Heart right ventricle (tissue), 16 donors: ENCODE measurements at regions of chr6 and their contacts with region 1.

Region 1: DNA sequence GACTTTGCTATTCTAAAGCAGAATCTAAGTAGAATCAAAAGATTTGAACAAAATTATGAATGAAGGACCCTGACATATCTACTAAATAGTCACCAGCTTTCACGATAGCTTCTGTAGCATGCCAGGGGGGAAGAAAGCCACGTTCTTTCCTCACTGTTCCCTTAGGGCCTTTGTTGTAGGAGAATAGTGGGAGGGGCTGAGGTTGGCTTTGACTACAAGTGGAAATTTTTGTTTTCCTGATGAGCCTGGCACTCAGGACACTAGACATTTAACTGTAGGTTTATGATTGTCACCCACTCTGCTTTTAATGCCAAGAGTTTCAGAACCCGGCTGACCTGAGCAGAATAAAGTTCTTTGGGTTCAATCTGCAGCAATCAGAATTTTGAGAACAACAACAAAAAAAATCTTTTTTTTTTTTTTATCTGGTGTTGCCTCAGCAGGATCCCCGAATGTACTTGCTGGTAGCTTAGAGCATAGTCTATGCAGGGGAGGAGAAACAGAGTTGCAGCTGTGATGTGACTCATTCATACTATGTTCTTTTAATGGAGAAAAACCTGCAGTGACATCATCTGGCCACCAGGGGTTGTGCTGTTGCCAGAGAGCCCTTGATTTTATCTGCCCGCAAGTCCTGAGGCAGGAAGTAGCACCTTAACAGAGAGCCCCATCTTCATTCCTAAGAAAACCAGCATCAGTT is 38.5 kb downstream of the TPD52L1 start:
- DNase-seq: peak; percentile 20 to 36
- ATAC-seq: peak in 7 of 8 donors; percentile 24 to 81 (median 66)
- H3K4me3 ChIP-seq: no peak overlapping the region
- H3K27ac ChIP-seq: no peak overlapping the region
- H3K4me1 ChIP-seq: peaks cover 4 to 69% (median 46%) of the 10 kb centered on the region in 9 donors
- H3K27me3 ChIP-seq: no peaks in the 10 kb centered on the region
- CTCF ChIP-seq: peak; percentile 66 to 84 (median 69)

Region 2: GRCh38 chr6:125142618-125143017 is 49.4 kb before region 1 on chr6:
- intact Hi-C with region 1: no loop called
- DNase-seq: no peak
- ATAC-seq: no peak
- H3K4me3 ChIP-seq: no peak overlapping the region
- H3K27ac ChIP-seq: no peak overlapping the region
- H3K4me1 ChIP-seq: no peaks in the 10 kb centered on the region
- H3K27me3 ChIP-seq: no peaks in the 10 kb centered on the region
- CTCF ChIP-seq: no peak

Region 3: GRCh38 chr6:125228986-125229479 is 37.0 kb after region 1 on chr6:
- intact Hi-C with region 1: loop called in 1 of 10 experiments (anchors 2 kb)
- DNase-seq: no peak
- ATAC-seq: peak in 2 of 8 donors; percentile 41 to 48
- H3K4me3 ChIP-seq: peak overlapping the region in 8 of 10 donors; percentile 6 to 33 (median 22)
- H3K27ac ChIP-seq: peak overlapping the region in 5 of 10 donors; percentile 16 to 56 (median 32)
- H3K4me1 ChIP-seq: peaks cover 0 to 46% (median 14%) of the 10 kb centered on the region in 9 donors
- H3K27me3 ChIP-seq: no peaks in the 10 kb centered on the region
- CTCF ChIP-seq: no peak

Region 4: DNA sequence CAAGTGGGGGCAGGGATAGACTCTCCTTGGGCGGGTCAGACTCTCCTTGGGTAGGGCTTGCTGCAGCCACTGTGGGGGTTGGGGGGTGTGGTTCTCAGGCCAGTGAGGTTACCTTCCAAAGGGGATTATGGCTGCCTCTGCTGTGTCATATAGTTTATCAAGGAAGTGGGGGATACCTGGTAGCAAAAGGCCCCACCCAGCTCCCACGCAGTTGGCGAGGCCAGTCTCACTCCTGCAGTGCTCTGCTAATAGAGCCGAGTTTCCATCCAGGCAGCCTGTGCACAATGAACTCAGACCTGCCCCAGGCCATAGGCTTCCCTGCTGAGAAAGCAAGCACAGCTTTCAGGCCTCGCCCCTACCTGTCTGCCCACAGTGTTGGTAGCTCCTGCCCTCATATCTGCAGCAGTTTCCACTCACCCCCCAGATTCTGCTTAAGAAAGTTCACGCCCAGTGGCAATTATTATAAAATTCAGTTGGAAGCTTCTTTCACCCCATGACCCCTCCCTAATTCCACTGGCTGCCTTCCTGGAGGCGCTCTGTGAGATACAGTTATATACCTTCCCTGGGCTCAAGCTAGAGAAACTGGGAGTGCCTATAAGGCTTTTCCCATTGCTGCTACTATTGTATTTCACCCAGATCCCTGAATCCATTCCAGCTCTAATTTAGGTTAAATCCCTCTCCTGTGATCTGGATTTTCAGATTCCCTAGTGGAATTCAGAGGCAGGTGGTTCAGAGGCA is 53.6 kb after region 1 on chr6:
- intact Hi-C with region 1: loop called in 1 of 10 experiments (anchors 2 kb)
- DNase-seq: no peak
- ATAC-seq: peak in 2 of 8 donors; percentile 17 to 33
- H3K4me3 ChIP-seq: no peak overlapping the region
- H3K27ac ChIP-seq: no peak overlapping the region
- H3K4me1 ChIP-seq: peaks cover 0 to 16% (median 0%) of the 10 kb centered on the region in 9 donors
- H3K27me3 ChIP-seq: no peaks in the 10 kb centered on the region
- CTCF ChIP-seq: no peak

Region 5: GRCh38 chr6:125623085-125623484 is 431.0 kb after region 1 on chr6:
- intact Hi-C with region 1: no loop called
- DNase-seq: no peak
- ATAC-seq: no peak
- H3K4me3 ChIP-seq: no peak overlapping the region
- H3K27ac ChIP-seq: no peak overlapping the region
- H3K4me1 ChIP-seq: peaks cover 0 to 7% (median 0%) of the 10 kb centered on the region in 9 donors
- H3K27me3 ChIP-seq: no peaks in the 10 kb centered on the region
- CTCF ChIP-seq: no peak